ENCODE measurements at regions of chr22 and their contacts with region 1.

Region 1: GRCh38 chr22:46122511-46122971 is 27.8 kb upstream of the PPARA start:
- DNase-seq: peak; percentile 69 to 83
- H3K4me3 ChIP-seq: peak overlapping the region in 1 of 2 donors; percentile 12
- H3K27ac ChIP-seq: no peak overlapping the region
- H3K4me1 ChIP-seq: peaks cover 0 to 18% (median 7%) of the 10 kb centered on the region in 4 donors
- H3K27me3 ChIP-seq: no peaks in the 10 kb centered on the region
- CTCF ChIP-seq: peak; percentile 90 to 96

Region 2: DNA sequence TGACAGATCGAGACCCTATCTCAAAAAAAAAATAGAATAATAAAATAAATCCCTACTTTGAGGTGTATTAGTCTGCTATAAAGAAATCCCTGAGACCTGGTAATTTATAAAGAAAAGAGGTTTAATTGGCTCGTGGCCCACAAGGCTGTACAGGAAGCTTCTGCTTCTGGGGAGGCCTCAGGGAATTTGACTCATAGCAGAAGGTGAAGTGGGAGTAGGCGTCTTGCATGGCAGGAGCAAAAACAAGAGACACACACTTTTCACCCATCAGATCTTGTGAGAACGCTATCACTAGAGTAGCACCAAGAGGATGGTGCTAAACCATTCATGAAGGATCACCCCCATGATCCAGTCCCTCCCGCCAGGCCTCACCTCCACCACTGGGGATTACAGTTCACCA is 98.4 kb after region 1 on chr22:
- intact Hi-C with region 1: no loop called
- DNase-seq: no peak
- H3K4me3 ChIP-seq: no peak overlapping the region
- H3K27ac ChIP-seq: no peak overlapping the region
- H3K4me1 ChIP-seq: no peaks in the 10 kb centered on the region
- H3K27me3 ChIP-seq: no peaks in the 10 kb centered on the region
- CTCF ChIP-seq: no peak

Region 3: DNA sequence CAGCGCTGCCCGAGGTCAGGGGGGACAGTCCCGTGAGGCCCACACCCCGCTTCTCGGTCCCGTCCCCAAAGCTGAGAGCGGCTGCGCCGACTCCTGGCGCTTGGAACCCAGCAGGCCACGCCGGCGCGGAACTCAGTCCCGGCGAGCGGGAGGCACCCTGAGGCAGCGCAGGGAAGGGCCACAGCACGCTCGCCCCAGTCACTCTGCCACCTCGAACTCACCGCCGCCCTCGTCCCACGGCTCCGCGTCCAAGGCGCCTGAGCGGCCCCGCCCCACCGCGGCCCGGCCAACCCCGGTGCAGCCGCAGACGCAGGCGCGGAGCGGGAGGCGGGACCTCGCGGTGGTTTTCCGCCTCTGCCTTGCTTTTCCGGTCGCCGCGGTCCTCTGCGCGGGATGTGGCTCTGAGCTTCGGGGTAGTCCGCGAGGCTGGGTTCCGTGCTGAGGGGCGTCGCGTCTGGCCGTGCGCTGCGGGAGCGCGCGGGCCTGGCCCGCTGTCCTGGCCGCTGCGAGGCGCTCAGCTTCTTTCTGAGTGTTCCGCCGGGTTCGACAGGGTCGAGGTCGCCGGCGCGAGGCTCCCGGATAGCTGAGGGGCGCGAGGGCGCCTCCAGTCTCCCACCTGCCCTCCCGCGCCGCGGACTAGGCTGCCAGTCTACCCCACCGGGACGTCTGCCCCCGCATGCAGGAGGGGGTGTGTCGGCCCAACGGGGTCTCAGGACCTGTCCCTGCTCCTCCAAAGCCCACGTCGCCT is 127.7 kb after region 1 on chr22 and contains the start of gene CDPF1:
- intact Hi-C with region 1: loop called (anchors 10 kb)
- DNase-seq: peak; percentile 87 to 94
- H3K4me3 ChIP-seq: peak within 1 kb of the TSS; percentile 70
- H3K27ac ChIP-seq: peak within 1 kb of the TSS; percentile 84 to 85
- H3K4me1 ChIP-seq: peaks cover 0 to 23% (median 15%) of the 10 kb centered on the region in 4 donors
- H3K27me3 ChIP-seq: no peaks in the 10 kb centered on the region
- CTCF ChIP-seq: no peak

Region 4: GRCh38 chr22:46312056-46312455 is 189.5 kb after region 1 on chr22:
- intact Hi-C with region 1: loop called (anchors 2 kb)
- DNase-seq: no peak
- H3K4me3 ChIP-seq: no peak overlapping the region
- H3K27ac ChIP-seq: no peak overlapping the region
- H3K4me1 ChIP-seq: no peaks in the 10 kb centered on the region
- H3K27me3 ChIP-seq: no peaks in the 10 kb centered on the region
- CTCF ChIP-seq: no peak

Region 5: DNA sequence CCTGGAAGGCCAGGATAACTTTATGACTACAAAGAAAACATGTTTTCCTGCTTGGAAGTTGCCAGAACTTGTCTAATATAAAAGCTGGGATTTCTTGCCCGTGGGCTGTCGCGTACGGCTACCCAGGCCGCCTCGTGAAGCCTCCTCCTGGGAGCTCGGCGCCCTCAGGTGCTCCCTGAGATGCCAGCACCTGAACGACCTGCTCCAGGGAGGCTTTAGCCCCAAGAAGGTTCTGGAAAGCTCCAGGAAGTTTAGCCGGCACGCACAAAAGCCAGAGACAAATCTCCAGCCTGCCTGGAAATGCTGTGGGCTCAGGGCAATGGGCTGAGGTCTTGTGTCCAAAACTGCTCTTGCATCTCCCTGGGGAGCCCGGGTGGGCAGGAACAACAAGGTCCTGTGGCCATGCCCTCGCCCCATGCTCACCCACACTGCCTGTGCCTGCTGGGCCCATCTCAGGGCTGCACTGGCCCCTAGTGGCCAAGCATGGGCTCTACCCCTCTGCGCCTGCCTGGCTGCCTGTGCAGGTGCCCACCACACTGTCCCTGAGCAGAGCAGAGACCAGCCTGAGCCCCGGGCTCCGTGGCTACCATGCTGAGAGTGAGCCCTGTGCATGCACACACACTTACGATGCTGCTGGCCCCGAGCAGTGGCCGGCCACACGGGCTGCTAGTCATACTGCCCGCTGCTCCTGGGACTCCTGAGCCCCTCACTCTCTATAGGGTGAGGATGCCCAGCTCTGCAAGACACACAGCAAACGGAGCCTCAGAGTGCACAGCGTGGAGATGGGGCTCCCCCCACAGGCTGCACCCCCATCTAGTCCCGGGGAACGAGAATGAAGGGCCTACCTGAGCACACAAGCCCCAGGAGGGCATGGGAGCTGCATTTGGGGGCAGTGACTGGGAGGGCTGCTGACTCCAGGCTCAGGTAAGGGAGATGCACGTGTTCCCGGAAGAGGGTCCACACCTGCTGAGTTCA is 419.8 kb after region 1 on chr22:
- intact Hi-C with region 1: loop called (anchors 10 kb)
- DNase-seq: peak; percentile 58 to 80
- H3K4me3 ChIP-seq: no peak overlapping the region
- H3K27ac ChIP-seq: no peak overlapping the region
- H3K4me1 ChIP-seq: peaks cover 0 to 27% (median 23%) of the 10 kb centered on the region in 4 donors
- H3K27me3 ChIP-seq: peaks cover 0 to 45% of the 10 kb centered on the region in 2 donors
- CTCF ChIP-seq: peak; percentile 78 to 83